Activated CD4-positive, alpha-beta T cell treated with anti-CD3 and anti-CD28 coated beads, Interleukin-2, amount 10 ng/mL, durations not matched to agents 24 days and 14 days (primary cell): ENCODE measurements at regions of chr6 and their contacts with region 1.

Region 1: DNA sequence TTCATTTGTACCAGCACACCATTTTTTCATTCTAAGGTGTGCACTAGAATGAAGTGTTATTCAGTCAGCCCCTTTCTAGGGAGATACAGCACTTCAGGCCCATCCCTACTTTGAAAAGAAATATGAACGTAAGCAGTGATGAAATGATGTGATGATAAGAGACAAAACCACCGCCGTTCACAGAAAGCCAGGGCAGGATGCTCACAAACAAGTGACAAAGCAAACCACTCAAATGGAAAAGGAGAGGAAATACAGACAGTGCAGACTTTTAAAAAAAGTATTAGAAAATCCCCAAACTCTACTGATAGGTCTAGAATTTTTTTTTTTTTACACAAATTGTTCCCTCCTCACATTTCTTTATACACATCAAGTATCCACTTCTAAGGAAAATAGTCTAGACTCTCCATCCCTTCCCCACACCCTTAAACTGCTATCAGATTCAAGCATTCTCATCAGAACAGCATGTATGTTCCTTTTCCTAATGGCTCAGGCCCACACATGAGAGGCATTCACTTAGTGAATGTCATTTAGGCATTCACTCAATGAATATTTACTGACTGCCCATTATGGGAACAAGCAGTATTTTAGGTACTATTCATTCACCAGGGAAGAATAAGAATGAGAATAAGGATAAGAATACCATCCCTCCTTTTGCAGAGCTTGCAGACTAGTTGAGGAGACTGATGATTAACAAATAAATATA is 243.5 kb downstream of the GMPR start:
- DNase-seq: peak; percentile 92
- H3K4me3 Mint-ChIP-seq: peak overlapping the region; percentile 54
- H3K27ac Mint-ChIP-seq: peak overlapping the region; percentile 99
- H3K4me1 Mint-ChIP-seq: peaks cover 82% of the 10 kb centered on the region
- H3K27me3 Mint-ChIP-seq: no peaks in the 10 kb centered on the region

Region 2: GRCh38 chr6:16319813-16320532 is 161.9 kb before region 1 on chr6:
- intact Hi-C with region 1: loop called (anchors 2 kb)
- DNase-seq: peak; percentile 90
- H3K4me3 Mint-ChIP-seq: peak overlapping the region; percentile 73
- H3K27ac Mint-ChIP-seq: peak overlapping the region; percentile 84
- H3K4me1 Mint-ChIP-seq: peaks cover 66% of the 10 kb centered on the region
- H3K27me3 Mint-ChIP-seq: no peaks in the 10 kb centered on the region

Region 3: GRCh38 chr6:16471222-16471909 is 10.5 kb before region 1 on chr6:
- intact Hi-C with region 1: loop called (anchors 1 kb)
- DNase-seq: no peak
- H3K4me3 Mint-ChIP-seq: peak overlapping the region; percentile 27
- H3K27ac Mint-ChIP-seq: peak overlapping the region; percentile 82
- H3K4me1 Mint-ChIP-seq: peaks cover 58% of the 10 kb centered on the region
- H3K27me3 Mint-ChIP-seq: no peaks in the 10 kb centered on the region

Region 4: GRCh38 chr6:16670183-16670582 is 188.3 kb after region 1 on chr6:
- intact Hi-C with region 1: loop called (anchors 5 kb)
- DNase-seq: no peak
- H3K4me3 Mint-ChIP-seq: peak overlapping the region; percentile 70
- H3K27ac Mint-ChIP-seq: peak overlapping the region; percentile 97
- H3K4me1 Mint-ChIP-seq: peaks cover 64% of the 10 kb centered on the region
- H3K27me3 Mint-ChIP-seq: no peaks in the 10 kb centered on the region

Region 5: GRCh38 chr6:16698997-16699868 is 217.4 kb after region 1 on chr6:
- intact Hi-C with region 1: loop called (anchors 2 kb)
- DNase-seq: peak; percentile 71
- H3K4me3 Mint-ChIP-seq: peak overlapping the region; percentile 71
- H3K27ac Mint-ChIP-seq: peak overlapping the region; percentile 95
- H3K4me1 Mint-ChIP-seq: peaks cover 68% of the 10 kb centered on the region
- H3K27me3 Mint-ChIP-seq: no peaks in the 10 kb centered on the region